ENCODE measurements at regions of chr1 and their contacts with region 1.

Region 1: GRCh38 chr1:67760030-67760821 is 73.0 kb downstream of the GNG12 start:
- DNase-seq: peak; percentile 59 to 62
- ATAC-seq: peak; percentile 73 to 88; a peak in 5 of 6 replicates
- H3K4me3 ChIP-seq: no peak overlapping the region; the same call in 2 of the 3 replicates
- H3K27ac ChIP-seq: peak overlapping the region; percentile 68 to 75
- H3K4me1 ChIP-seq: peaks cover 50% of the 10 kb centered on the region
- CTCF ChIP-seq: peak; percentile 85
- EP300 ChIP-seq: no peak
- POLR2A ChIP-seq: no peak
- RAD21 ChIP-seq: peak; percentile 78 to 87

Region 2: GRCh38 chr1:67540733-67541125 is 219.5 kb before region 1 on chr1:
- CTCF ChIA-PET with region 1: interaction called, 197 read pairs
- POLR2A ChIA-PET with region 1: no interaction called
- DNase-seq: no peak
- ATAC-seq: no peak
- H3K4me3 ChIP-seq: no peak overlapping the region
- H3K27ac ChIP-seq: no peak overlapping the region
- H3K4me1 ChIP-seq: no peaks in the 10 kb centered on the region
- CTCF ChIP-seq: no peak
- EP300 ChIP-seq: no peak
- POLR2A ChIP-seq: no peak
- RAD21 ChIP-seq: no peak

Region 3: DNA sequence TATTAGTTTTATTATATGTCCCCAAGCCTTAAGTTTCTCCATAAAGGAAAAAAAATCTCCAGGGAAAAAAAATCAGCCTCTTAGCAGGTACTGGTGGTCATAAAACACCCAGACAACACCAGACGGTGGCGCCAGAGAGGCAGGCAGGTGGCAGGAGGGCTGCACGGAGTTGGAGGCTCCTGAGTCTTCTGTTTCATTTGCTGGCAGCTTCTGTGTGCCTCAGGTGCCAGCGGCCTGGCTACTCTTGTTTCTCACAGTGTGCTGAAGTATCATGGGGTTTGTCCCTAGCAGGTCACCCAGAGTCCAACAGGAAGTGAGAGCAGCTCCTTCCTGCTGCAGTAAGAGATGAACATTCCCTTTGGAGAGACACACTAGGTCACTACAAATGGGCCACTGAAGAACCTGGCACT is 198.5 kb before region 1 on chr1:
- CTCF ChIA-PET with region 1: interaction called, 63 read pairs
- POLR2A ChIA-PET with region 1: no interaction called
- DNase-seq: peak; percentile 49 to 82
- ATAC-seq: peak; percentile 91 to 95
- H3K4me3 ChIP-seq: no peak overlapping the region
- H3K27ac ChIP-seq: peak overlapping the region; percentile 60 to 73; a peak in 4 of 6 replicates
- H3K4me1 ChIP-seq: peaks cover 20% of the 10 kb centered on the region
- CTCF ChIP-seq: peak; percentile 76
- EP300 ChIP-seq: no peak
- POLR2A ChIP-seq: no peak
- RAD21 ChIP-seq: peak; percentile 85 to 87

Region 4: DNA sequence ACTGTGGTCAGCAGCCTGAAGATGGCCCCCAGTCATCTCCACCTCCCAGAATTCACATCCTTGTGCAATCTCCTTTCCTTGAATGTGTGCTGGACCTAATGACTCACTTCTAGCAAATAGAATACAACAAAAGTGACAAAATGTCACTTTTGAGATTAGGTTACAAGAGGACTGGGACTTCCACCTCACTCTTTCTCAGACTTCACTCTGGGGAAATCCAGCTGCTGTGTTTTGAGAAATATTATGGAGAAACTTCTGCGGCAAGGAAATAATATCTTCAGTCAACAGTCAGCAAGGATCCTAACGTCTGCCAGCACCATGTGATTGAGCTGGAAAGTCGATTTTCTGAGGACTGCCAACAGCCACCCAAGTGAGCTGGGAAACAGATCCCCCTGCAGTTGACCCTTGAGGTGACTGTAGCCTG is 145.7 kb before region 1 on chr1:
- CTCF ChIA-PET with region 1: no interaction called
- POLR2A ChIA-PET with region 1: no interaction called
- DNase-seq: peak; percentile 23 to 36
- ATAC-seq: peak; percentile 47 to 57; a peak in 4 of 6 replicates
- H3K4me3 ChIP-seq: no peak overlapping the region
- H3K27ac ChIP-seq: peak overlapping the region in 1 of 2 experiments; percentile 60; a peak in 2 of 6 replicates
- H3K4me1 ChIP-seq: peaks cover 15% of the 10 kb centered on the region; the same call in 2 of the 3 replicates
- CTCF ChIP-seq: no peak
- EP300 ChIP-seq: no peak
- POLR2A ChIP-seq: no peak
- RAD21 ChIP-seq: no peak

Region 5: GRCh38 chr1:67685067-67685557 is 75.1 kb before region 1 on chr1 and contains the start of gene GADD45A:
- CTCF ChIA-PET with region 1: interaction called, 7 read pairs
- POLR2A ChIA-PET with region 1: interaction called, 15 read pairs
- DNase-seq: peak; percentile 94 to 97
- ATAC-seq: peak; percentile 87 to 95
- H3K4me3 ChIP-seq: peak within 1 kb of the TSS; percentile 80
- H3K27ac ChIP-seq: peak within 1 kb of the TSS; percentile 96 to 99
- H3K4me1 ChIP-seq: peaks cover 43% of the 10 kb centered on the region
- CTCF ChIP-seq: no peak
- EP300 ChIP-seq: no peak
- POLR2A ChIP-seq: peak; percentile 99
- RAD21 ChIP-seq: peak in 1 of 2 experiments; percentile 28; a peak in 1 of 5 replicates
- polyA plus RNA-seq, gene GADD45A: 26.6 and 44.7 TPM in 2 replicates

Region 6: GRCh38 chr1:67715819-67716218 is 44.4 kb before region 1 on chr1:
- CTCF ChIA-PET with region 1: interaction called, 13 read pairs
- POLR2A ChIA-PET with region 1: no interaction called
- DNase-seq: no peak
- ATAC-seq: no peak
- H3K4me3 ChIP-seq: no peak overlapping the region
- H3K27ac ChIP-seq: peak overlapping the region; percentile 47 to 70; a peak in 4 of 6 replicates
- H3K4me1 ChIP-seq: peaks cover 90% of the 10 kb centered on the region
- CTCF ChIP-seq: no peak
- EP300 ChIP-seq: no peak
- POLR2A ChIP-seq: no peak
- RAD21 ChIP-seq: no peak

Region 7: GRCh38 chr1:67793562-67793961 is 33.3 kb after region 1 on chr1:
- CTCF ChIA-PET with region 1: interaction called, 24 read pairs
- POLR2A ChIA-PET with region 1: no interaction called
- DNase-seq: no peak
- ATAC-seq: no peak
- H3K4me3 ChIP-seq: no peak overlapping the region
- H3K27ac ChIP-seq: peak overlapping the region; percentile 89 to 99
- H3K4me1 ChIP-seq: peaks cover 69% of the 10 kb centered on the region
- CTCF ChIP-seq: no peak
- EP300 ChIP-seq: no peak
- POLR2A ChIP-seq: no peak
- RAD21 ChIP-seq: no peak

Region 8: DNA sequence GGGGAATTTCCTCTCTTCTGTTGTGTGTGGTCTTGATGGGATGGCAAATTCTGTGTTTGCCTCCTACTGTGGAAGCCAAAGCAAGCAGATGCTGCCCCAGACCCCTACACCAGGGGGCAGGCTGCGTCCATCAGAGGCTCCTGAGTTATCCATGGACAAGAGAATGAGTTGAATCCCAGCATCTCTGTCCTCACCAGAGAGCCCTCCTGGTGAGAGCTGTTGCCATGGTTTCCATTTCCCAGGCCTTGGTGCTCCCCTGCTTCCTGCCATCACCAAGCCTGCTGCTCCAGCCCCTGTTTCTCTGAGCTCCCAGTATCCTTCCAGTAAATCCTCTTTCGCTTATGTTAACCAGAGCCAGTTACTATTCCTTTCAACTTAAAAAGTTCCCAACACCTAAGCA is 93.5 kb after region 1 on chr1:
- CTCF ChIA-PET with region 1: interaction called, 37 read pairs
- POLR2A ChIA-PET with region 1: no interaction called
- DNase-seq: peak; percentile 59 to 83
- ATAC-seq: peak; percentile 76 to 86
- H3K4me3 ChIP-seq: no peak overlapping the region
- H3K27ac ChIP-seq: peak overlapping the region; percentile 35 to 88
- H3K4me1 ChIP-seq: peaks cover 26% of the 10 kb centered on the region
- CTCF ChIP-seq: peak; percentile 71
- EP300 ChIP-seq: no peak
- POLR2A ChIP-seq: no peak
- RAD21 ChIP-seq: peak; percentile 95 to 97

Region 9: GRCh38 chr1:67969446-67969845 is 209.2 kb after region 1 on chr1:
- CTCF ChIA-PET with region 1: no interaction called
- POLR2A ChIA-PET with region 1: no interaction called
- DNase-seq: no peak
- ATAC-seq: no peak
- H3K4me3 ChIP-seq: no peak overlapping the region
- H3K27ac ChIP-seq: peak overlapping the region; percentile 41 to 80; a peak in 5 of 6 replicates
- H3K4me1 ChIP-seq: peaks cover 11% of the 10 kb centered on the region; the same call in 1 of the 3 replicates
- CTCF ChIP-seq: no peak
- EP300 ChIP-seq: no peak
- POLR2A ChIP-seq: no peak
- RAD21 ChIP-seq: no peak

Region 10: GRCh38 chr1:67983867-67984266 is 223.6 kb after region 1 on chr1:
- CTCF ChIA-PET with region 1: no interaction called
- POLR2A ChIA-PET with region 1: no interaction called
- DNase-seq: no peak
- ATAC-seq: no peak
- H3K4me3 ChIP-seq: no peak overlapping the region
- H3K27ac ChIP-seq: peak overlapping the region in 1 of 2 experiments; percentile 95; a peak in 3 of 6 replicates
- H3K4me1 ChIP-seq: peaks cover 35% of the 10 kb centered on the region
- CTCF ChIP-seq: no peak
- EP300 ChIP-seq: no peak
- POLR2A ChIP-seq: no peak
- RAD21 ChIP-seq: no peak

Region 11: GRCh38 chr1:68049941-68050878 is 290.0 kb after region 1 on chr1 and contains the start of gene DIRAS3:
- CTCF ChIA-PET with region 1: no interaction called
- POLR2A ChIA-PET with region 1: no interaction called
- DNase-seq: peak; percentile 6 to 21
- ATAC-seq: peak; percentile 62 to 70; a peak in 5 of 6 replicates
- H3K4me3 ChIP-seq: peak within 1 kb of the TSS; percentile 48
- H3K27ac ChIP-seq: peak within 1 kb of the TSS; percentile 7 to 61; a peak in 4 of 6 replicates
- H3K4me1 ChIP-seq: no peaks in the 10 kb centered on the region
- CTCF ChIP-seq: no peak
- EP300 ChIP-seq: no peak
- POLR2A ChIP-seq: no peak
- RAD21 ChIP-seq: no peak
- polyA plus RNA-seq, gene DIRAS3: 3.3 and 3.6 TPM in 2 replicates